Activated naive CD8-positive, alpha-beta T cell treated with anti-CD3 and anti-CD28 coated beads, Interleukin-2, amount 10 ng/mL, durations not matched to agents 7 days and 5 days (primary cell): ENCODE measurements at regions of chr16 and their contacts with region 1.

Region 1: DNA sequence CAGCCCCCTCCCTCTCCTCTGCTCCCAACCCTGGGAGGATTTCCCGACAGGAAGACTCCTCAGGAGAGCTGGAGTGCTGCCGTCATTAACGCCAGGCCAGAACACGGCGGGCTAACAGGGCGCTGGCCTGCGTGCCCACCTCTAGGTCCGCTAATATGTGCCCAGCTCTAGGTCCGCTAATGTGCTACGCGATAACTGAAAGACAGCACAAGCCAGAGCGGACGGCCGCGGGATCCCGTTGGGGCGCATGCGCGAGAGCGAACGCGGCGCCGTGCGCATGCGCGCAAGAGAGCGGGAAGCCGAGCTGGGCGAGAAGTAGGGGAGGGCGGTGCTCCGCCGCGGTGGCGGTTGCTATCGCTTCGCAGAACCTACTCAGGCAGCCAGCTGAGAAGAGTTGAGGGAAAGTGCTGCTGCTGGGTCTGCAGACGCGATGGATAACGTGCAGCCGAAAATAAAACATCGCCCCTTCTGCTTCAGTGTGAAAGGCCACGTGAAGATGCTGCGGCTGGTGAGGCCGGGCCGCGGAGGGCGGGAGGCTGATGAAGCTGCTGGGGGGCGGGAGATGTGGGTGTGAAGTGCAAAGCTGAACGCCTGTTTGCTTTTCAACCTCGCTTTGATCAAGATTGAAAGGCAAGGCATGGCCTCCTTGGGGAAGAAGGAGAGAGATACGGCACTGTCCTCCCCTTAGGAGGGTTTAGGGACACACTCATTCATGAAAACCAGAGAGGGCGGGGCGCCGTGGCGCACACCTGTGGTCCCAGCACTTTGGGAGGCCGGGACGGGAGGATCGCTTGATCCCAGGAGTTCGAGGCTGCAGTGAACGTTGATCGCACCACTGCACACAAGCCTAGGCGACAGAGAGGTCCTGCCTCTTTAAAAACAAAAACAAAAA is at the start of gene CKLF:
- DNase-seq: peak; percentile 97
- ATAC-seq: peak; percentile 80
- H3K4me3 Mint-ChIP-seq: peak within 1 kb of the TSS; percentile 96
- H3K27ac Mint-ChIP-seq: peak within 1 kb of the TSS; percentile 93
- H3K4me1 Mint-ChIP-seq: peaks cover 66% of the 10 kb centered on the region
- H3K27me3 Mint-ChIP-seq: no peaks in the 10 kb centered on the region
- total RNA-seq, gene CKLF: 124 to 130 TPM

Region 2: DNA sequence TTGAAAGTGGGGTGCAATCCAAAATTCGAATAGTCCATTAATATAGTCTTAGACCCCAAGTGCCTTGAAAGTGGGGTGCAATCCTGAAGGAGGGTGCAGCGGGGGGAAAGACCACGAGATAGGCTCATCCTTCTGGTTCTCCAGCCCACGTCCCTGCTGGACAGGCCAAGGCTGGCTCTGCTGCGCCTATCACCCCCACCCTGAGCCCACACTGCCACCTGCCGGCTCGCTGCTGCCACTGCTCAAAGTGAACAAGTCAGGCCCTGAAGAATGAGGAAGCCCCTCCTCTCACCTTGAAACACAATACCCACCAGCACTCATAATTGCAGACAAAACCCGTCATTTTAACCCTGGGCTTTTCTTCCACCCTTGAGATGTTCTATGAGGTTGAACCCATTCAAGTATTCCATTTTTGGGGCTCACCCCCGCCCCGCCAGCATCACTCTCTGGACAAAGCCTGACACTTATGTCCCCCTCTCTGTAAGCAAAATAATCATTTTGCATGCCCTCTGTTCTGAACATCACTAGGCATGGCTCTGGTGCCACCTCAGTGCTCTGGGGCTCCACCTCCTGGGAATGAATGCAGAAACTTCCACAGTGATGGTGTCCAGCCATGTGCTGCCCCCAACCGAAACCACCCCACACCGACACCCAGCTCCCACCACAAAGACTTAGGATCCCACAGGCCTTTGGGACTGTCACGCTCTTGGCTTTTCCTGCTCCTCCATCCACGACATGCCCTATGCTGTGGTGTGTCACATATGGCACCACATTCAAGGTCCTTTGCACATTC is 68.6 kb before region 1 on chr16:
- POLR2A ChIA-PET with region 1: no interaction called
- DNase-seq: peak; percentile 84
- ATAC-seq: peak; percentile 56
- H3K4me3 Mint-ChIP-seq: no peak overlapping the region
- H3K27ac Mint-ChIP-seq: no peak overlapping the region
- H3K4me1 Mint-ChIP-seq: peaks cover 20% of the 10 kb centered on the region
- H3K27me3 Mint-ChIP-seq: no peaks in the 10 kb centered on the region

Region 3: DNA sequence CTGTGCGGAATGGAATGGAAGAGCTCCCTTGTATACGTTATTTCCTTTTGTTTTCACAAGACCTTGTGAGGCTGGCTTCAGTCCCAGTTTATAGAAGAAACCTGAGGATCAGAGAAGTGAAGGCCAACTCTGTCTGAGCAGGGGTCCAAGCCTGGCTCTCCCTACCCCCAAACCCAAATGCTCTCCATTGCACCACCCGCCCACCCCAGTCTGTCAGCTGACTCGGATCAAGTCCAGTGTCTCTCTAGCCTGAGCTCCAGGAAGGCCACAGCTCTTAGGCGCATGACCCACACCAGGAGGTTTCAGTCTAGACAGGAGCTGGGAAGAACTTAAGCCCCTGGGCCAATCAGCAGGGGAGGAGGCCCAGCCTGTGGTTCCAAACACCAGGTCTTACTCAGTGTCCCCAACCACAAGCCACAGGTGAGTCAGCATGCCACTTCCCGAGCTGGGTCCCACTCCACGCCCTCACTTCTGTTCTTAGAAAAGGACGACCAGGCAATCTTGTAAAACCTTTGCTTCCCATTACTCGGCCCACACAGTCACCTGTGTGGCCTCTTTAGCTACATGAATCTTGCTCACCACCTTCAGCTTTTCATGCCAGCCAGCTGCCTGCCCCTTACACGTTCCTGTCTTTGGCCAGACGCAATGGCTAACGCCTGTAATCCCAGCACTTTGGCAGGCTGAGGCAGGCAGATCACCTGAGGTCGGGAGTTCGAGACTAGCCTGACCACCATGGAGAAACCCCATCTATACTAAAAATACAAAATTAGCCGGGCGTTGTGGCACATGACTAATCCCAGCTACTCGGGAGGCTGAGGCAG is 30.4 kb before region 1 on chr16:
- POLR2A ChIA-PET with region 1: interaction called, 157 read pairs
- DNase-seq: peak; percentile 87
- ATAC-seq: peak; percentile 74
- H3K4me3 Mint-ChIP-seq: peak overlapping the region; percentile 66
- H3K27ac Mint-ChIP-seq: peak overlapping the region; percentile 88
- H3K4me1 Mint-ChIP-seq: peaks cover 78% of the 10 kb centered on the region
- H3K27me3 Mint-ChIP-seq: no peaks in the 10 kb centered on the region

Region 4: DNA sequence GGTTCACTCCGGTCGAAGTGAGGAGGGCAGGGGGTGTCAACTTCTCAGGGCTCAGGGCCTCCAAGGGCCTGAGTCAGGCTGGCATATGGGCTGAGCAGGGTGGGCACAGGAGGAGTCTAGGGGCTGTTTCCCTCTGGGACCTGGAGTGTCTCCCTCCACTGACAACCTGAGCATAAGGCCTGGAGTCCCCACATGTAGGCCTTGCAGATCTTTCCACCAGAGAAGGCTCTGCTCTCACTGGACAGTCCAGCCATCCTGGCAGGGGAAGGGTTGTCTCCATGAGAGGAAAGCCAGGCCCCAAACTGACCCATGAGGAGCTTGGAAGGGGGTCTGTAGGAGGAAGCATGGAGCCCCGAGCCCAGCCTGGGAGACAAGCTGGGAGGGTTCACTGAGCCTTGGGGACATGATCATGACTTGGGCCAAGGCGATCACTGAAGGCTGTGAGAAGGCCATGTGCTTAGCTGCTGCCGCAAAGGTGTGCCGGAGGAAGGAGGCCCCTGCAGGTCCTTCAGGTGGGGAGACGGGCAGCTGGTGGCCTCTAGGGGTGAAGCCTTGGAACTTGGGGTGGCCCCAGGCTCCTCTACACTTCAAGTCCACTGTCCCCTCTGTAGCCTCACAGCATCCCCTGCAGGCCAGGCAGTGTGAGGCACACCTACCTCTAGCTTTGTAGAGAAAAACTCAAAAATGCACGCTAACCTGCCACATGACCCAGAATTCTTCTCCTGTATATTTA is 36.6 kb after region 1 on chr16:
- POLR2A ChIA-PET with region 1: interaction called, 14 read pairs
- DNase-seq: peak; percentile 74
- ATAC-seq: peak; percentile 98
- H3K4me3 Mint-ChIP-seq: peak overlapping the region; percentile 82
- H3K27ac Mint-ChIP-seq: peak overlapping the region; percentile 77
- H3K4me1 Mint-ChIP-seq: peaks cover 46% of the 10 kb centered on the region
- H3K27me3 Mint-ChIP-seq: no peaks in the 10 kb centered on the region

Region 5: GRCh38 chr16:66596986-66597848 is 44.7 kb after region 1 on chr16:
- POLR2A ChIA-PET with region 1: interaction called, 19 read pairs
- DNase-seq: no peak
- ATAC-seq: peak; percentile 60
- H3K4me3 Mint-ChIP-seq: peak overlapping the region; percentile 79
- H3K27ac Mint-ChIP-seq: peak overlapping the region; percentile 98
- H3K4me1 Mint-ChIP-seq: peaks cover 36% of the 10 kb centered on the region
- H3K27me3 Mint-ChIP-seq: no peaks in the 10 kb centered on the region